Vagina (tissue), 2 donors: ENCODE measurements at regions of chr17 and their contacts with region 1.

Region 1: DNA sequence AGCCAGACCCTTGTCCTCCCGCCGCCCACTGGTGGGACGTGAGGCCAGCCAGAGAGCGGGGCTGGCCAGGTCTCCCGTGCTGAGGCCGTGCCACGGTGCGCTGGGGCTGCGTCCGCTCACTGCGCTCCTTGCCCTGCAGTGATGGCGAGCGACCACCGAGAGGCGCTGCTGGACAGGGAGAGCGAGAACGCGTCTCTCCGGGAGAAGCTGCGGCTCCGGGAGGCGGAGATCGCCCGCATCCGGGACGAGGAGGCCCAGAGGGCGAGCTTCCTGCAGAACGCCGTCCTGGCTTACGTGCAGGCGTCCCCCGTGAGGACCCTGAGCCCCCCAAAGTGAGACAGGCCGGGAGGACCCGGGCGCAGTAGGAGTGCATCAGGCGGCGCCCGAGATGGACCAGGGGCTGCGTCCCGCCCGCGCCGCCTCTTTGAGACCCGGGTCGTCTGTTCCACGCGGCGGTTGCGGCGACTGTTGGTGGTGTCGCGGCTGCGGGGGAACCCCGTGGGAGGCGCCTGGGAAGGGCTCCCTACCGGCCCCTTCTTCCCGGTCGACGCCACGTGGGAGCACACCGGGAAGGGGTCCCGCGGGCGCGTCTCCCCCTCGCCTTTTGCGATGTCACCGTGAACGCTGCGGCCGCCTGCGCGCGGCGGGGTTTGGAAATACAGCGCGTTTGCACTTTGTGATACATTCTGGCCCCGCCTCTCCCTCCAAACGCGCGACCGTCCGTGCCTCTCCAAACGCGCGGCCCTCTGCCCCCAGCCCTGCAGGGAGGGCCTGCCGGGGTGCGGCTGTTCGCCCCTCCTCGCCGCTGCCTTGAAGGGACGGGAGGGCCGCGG is 792 bp upstream of the RAC3 start:
- DNase-seq: no peak
- H3K4me3 ChIP-seq: peak overlapping the region; percentile 44 to 66
- H3K27ac ChIP-seq: peak overlapping the region; percentile 34
- H3K4me1 ChIP-seq: peaks cover 15% of the 10 kb centered on the region
- H3K27me3 ChIP-seq: no peaks in the 10 kb centered on the region
- CTCF ChIP-seq: peak; percentile 84 to 96 (median 92)
- POLR2A ChIP-seq: no peak

Region 2: DNA sequence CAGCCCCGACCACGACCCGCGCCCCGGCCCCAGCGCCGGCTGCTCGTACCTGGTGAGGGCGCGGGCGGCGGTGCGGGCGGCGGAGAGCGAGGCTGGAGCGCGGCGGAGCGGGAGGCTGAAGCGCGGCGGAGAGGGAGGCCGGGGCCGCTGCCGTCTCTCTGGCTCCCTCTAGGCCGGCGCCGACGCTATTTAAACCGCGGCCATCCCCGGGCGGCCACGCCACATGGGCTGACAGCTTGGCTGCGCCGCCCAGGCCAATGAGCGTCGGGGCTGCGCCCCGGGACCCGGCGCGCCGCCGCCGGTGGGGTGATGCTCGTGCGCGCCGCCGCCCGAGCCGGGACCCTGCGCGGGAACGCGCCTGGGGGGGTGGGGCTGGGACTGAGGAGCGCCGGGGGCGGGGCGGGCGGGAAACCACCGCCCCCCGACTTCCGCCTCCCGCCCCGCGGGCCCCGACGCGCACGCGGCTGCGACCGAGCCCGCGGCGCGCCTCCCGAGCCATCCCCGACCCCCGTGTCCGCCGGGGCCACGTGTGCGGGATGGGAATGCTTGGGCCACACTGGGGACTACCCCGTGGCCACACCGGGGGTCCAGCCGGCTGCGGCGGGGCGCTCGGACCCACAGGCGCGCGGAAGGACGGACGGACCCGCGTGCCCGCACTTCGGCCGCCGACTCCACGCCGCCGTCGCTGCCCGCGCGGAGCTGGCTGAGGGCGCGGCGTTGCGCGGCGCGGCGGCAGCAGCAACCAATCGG is 67.6 kb after region 1 on chr17 and contains the start of gene FASN:
- intact Hi-C with region 1: loop called (anchors 5 kb)
- DNase-seq: no peak
- H3K4me3 ChIP-seq: peak within 1 kb of the TSS; percentile 63 to 98
- H3K27ac ChIP-seq: peak within 1 kb of the TSS; percentile 93
- H3K4me1 ChIP-seq: peaks cover 59% of the 10 kb centered on the region
- H3K27me3 ChIP-seq: no peaks in the 10 kb centered on the region
- CTCF ChIP-seq: no peak
- POLR2A ChIP-seq: peak in 1 of 2 donors; percentile 96
- total RNA-seq, gene FASN: 127 TPM

Region 3: DNA sequence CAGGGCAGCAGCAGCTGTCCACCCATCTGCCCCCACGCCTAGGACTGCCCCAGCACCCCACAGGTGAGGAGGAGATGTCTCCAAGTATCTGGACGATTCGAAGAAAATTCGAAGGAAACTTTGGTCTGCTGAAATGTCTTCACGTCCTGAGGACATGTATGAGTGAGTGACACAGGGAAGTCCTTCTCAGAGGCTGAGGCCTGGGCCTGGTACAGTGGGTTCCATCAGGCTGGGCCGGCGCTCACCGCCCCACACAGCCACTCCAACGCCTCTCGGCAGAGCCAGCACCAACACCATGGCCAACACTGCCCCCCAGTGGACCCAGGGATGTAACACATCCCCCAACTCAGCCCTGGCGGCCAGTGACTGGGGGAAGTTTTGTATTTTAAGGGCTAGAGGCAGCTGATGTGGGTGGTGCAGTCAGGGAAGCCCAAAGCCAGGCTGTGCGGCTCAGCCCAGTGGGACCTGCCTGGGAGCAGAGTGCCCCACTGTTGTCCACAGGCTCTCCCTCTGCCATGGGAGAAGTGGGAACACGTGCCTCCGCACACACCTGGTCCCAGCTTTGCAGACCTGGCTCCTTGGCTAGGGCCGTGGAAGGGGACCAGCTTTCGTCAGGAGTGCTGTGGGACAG is 123.2 kb after region 1 on chr17:
- intact Hi-C with region 1: loop called (anchors 5 kb)
- DNase-seq: no peak
- H3K4me3 ChIP-seq: no peak overlapping the region
- H3K27ac ChIP-seq: no peak overlapping the region
- H3K4me1 ChIP-seq: peaks cover 22% of the 10 kb centered on the region
- H3K27me3 ChIP-seq: no peaks in the 10 kb centered on the region
- CTCF ChIP-seq: peak; percentile 78 to 96 (median 78)
- POLR2A ChIP-seq: no peak